ENCODE measurements at regions of chr19 and their contacts with region 1.

Region 1: GRCh38 chr19:52296773-52297600 is at the start of gene ZNF480:
- DNase-seq: peak; percentile 96
- ATAC-seq: peak; percentile 88
- total RNA-seq, gene ZNF480: 18.5 TPM

Region 2: DNA sequence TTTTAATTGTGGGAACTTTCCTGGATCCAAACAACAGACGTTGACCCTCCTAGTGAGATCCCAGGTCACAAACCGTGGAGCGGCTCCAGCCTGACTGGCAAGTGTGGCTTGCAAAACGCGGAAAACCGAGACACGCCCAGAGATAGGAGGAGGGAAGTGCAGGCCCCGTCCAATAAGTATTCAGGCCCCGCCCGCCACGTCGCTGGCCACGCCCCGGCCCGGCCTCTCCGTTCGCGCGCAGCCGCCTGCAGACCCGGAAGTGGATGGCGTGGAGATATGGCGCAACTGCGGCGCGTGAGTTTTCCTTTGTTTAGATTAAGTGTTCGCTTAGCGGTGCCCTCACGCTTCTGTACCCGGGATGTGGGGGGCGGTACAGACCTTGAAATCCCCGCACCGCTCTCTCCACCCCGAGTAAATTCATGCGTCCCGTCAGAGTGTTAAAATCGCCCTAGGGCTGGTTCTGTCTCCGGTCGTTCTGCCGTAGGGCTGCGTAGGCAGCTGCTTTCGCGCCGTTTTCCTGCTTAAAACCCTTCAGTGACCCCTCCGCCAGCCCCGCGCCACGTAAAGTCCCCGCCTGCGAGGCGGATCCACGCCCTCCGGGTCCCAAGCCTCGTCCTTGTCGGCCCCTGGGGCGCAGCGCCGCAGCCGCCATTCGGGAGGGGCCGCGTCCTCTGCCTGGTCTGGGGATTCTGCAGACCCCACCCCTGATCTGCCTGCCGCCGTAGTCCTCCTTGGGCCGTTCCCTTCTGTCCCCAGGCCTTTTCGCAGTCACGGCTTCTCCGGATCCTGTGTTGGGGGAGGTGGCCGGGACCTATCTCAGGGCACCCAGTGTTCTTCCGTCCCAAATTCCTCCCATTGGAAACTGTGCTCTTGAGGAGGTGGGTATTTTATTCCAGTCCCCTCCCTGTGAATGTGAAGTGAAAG is 27.4 kb before region 1 on chr19 and contains the start of gene ZNF766:
- intact Hi-C with region 1: loop called (anchors 1 kb)
- DNase-seq: peak; percentile 99
- ATAC-seq: peak; percentile 100
- total RNA-seq, gene ZNF766: 9.7 TPM

Region 3: GRCh38 chr19:52336117-52336790 is 39.3 kb after region 1 on chr19 and contains the start of gene ZNF610:
- intact Hi-C with region 1: loop called (anchors 2 kb)
- DNase-seq: peak; percentile 91
- ATAC-seq: peak; percentile 99
- total RNA-seq, gene ZNF610: 2.5 TPM

Region 4: GRCh38 chr19:52601025-52601973 is 304.3 kb after region 1 on chr19:
- intact Hi-C with region 1: loop called (anchors 5 kb)
- DNase-seq: peak; percentile 99
- ATAC-seq: peak; percentile 100